ENCODE measurements at regions of chr20 and their contacts with region 1.

Region 1: GRCh38 chr20:50464026-50464724 is 46.0 kb upstream of the PTPN1 start:
- DNase-seq: peak; percentile 72
- ATAC-seq: peak; percentile 82
- H3K4me3 Mint-ChIP-seq: no peak overlapping the region
- H3K27ac Mint-ChIP-seq: no peak overlapping the region
- H3K4me1 Mint-ChIP-seq: peaks cover 2% of the 10 kb centered on the region
- H3K27me3 Mint-ChIP-seq: no peaks in the 10 kb centered on the region; the same call in 1 of the 2 replicates
- CTCF ChIP-seq: peak; percentile 79; the same call in 1 of the 2 replicates

Region 2: DNA sequence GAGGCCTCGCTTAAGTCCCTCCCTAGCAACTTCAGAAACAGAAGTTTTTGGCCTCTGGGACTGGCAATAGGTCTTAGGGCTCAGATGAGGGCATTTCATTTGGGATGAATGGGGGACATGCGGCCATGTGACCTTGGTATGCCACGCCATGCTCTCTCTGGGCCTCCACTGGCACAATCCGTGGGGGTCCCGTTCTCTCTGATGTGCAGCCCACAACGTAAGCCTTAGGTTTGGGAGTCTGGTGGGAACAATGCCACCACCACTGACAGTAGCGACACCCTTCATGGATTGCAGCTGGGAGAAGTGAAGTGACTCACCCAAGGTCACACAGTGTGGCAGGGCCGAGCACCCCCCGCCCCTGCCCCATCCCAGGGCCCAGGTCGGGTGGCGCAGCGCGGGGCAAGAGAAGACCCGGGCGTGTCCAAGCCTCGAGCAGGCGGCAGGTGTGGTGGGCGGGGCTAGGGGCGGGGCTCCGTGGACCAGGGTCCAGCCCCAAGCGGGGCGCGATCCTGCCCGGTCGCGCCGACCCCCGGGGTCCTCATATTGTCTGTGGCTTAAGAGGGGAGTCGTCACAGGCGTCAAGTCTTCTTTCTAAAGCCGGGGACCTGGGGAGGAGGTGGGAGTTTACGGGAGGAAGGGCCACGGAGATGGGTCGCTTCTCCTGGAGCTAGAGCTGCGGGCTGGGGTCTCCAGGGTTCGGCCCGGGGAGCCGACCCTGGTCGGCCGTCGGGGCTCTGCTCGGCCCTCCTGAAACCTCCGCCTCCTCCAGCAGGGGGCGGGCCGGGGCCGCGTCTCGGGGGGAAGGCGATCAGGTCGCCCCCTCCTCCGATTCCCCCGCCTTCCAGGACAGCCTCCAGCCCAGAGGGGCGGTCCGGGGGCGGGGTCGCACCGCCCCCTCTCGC is 274.2 kb before region 1 on chr20:
- CTCF ChIA-PET with region 1: interaction called, 27 read pairs
- POLR2A ChIA-PET with region 1: no interaction called
- DNase-seq: peak; percentile 96
- ATAC-seq: peak; percentile 75
- H3K4me3 Mint-ChIP-seq: peak overlapping the region; percentile 57
- H3K27ac Mint-ChIP-seq: no peak overlapping the region
- H3K4me1 Mint-ChIP-seq: peaks cover 46% of the 10 kb centered on the region
- H3K27me3 Mint-ChIP-seq: peaks cover 11% of the 10 kb centered on the region
- CTCF ChIP-seq: peak; percentile 72

Region 3: GRCh38 chr20:50450881-50451752 is 13.1 kb before region 1 on chr20:
- CTCF ChIA-PET with region 1: interaction called, 10 read pairs
- POLR2A ChIA-PET with region 1: no interaction called
- DNase-seq: peak; percentile 66
- ATAC-seq: peak; percentile 92
- H3K4me3 Mint-ChIP-seq: peak overlapping the region; percentile 14; the same call in 1 of the 2 replicates
- H3K27ac Mint-ChIP-seq: peak overlapping the region; percentile 71
- H3K4me1 Mint-ChIP-seq: peaks cover 21% of the 10 kb centered on the region
- H3K27me3 Mint-ChIP-seq: no peaks in the 10 kb centered on the region; the same call in 1 of the 2 replicates
- CTCF ChIP-seq: no peak

Measured in WTC11 (cell line).